GM23248 (cell line): ENCODE measurements at regions of chr4 and their contacts with region 1.

Region 1: DNA sequence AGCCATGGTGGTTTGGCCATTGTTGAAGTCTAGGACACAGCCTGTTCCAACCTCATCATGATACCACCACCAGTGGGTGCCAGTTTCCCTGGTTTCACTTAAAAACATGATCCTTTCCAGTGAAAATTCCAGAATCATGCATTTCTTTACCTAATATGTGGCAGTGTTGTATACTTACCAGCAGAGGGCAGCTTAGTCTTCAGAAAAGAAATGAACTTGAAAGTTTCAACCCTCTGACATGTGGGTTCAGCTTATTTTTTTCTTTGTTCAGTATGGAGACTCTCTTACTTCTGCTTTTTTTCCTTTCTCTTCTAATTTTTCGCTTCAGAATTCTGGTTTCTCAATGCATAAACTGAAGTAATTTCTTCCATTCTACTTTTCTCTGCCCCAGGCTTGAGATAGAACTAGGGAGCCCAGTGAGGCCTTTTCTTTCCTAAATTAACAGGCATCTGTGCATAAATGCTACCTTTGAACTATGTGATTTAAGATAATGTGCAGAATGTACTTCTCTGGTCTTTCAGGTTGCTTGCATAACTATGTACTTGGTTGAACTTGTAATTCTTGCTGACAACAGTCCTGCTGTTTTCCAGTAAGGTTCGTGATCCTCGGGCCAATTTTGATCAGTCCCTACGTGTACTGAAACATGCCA is 10.7 kb downstream of the LIAS start:
- DNase-seq: peak; percentile 92
- H3K4me3 ChIP-seq: no peak overlapping the region
- H3K27ac ChIP-seq: peak overlapping the region; percentile 57
- H3K4me1 ChIP-seq: peaks cover 8% of the 10 kb centered on the region
- H3K27me3 ChIP-seq: no peaks in the 10 kb centered on the region

Region 2: GRCh38 chr4:39154009-39154408 is 315.5 kb before region 1 on chr4:
- in situ Hi-C with region 1: no loop called
- DNase-seq: no peak
- H3K4me3 ChIP-seq: no peak overlapping the region
- H3K27ac ChIP-seq: no peak overlapping the region
- H3K4me1 ChIP-seq: peaks cover 9% of the 10 kb centered on the region
- H3K27me3 ChIP-seq: no peaks in the 10 kb centered on the region

Region 3: DNA sequence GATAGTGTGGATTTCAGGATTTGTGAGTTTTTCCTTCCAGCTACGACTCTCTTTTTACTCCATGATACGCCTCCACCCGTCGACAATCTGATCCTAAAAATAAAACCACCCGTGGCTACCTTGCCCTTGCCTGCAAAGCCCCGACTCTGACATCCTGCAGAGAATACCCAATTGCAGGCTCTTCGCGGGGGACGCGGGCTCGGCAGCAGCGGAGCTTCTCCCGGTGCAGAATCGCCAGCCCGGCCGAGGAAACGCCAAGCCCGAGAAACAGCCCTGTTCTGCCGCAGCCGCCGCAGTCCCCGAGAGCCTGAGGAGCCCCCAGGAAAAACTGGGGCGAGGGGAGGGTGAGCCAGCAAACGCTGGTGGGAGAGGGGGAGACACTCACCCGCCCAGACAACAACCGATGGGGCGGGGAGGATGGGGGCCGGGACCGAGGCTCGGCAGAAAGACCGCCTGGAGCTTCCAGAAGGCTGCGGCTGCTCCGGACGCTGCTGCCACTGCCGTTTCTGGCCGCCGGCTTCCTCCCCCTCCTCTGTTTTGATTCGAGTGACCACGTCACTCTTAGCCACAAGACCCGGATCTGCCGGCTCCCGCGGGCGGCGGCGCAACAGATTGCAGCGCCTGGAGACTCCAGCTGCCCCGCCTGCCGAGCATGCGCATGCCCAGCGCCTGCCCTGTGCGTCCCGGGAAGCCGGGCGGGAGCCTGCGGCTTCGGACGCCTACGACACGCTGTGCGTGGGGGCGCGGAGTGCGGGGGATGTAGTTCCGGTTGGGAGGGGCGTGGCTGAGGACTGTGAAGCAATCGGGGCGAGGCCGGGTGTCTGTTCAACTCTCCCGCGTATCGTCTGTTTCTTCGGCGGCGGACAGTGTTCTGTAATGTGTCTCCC is 169.0 kb after region 1 on chr4 and contains the start of gene SMIM14:
- in situ Hi-C with region 1: loop called (anchors 10 kb)
- DNase-seq: peak; percentile 100
- H3K4me3 ChIP-seq: peak within 1 kb of the TSS; percentile 97
- H3K27ac ChIP-seq: peak within 1 kb of the TSS; percentile 99
- H3K4me1 ChIP-seq: peaks cover 26% of the 10 kb centered on the region
- H3K27me3 ChIP-seq: no peaks in the 10 kb centered on the region
- total RNA-seq, gene SMIM14: 54.5 and 67.5 TPM in 2 replicates